ENCODE measurements at regions of chr5 and their contacts with region 1.

Region 1: GRCh38 chr5:138575194-138576015 is at the start of gene HSPA9:
- DNase-seq: peak; percentile 98
- ATAC-seq: peak; percentile 91
- H3K4me3 ChIP-seq: peak within 1 kb of the TSS; percentile 85 to 97 (median 87)
- H3K27ac ChIP-seq: peak within 1 kb of the TSS; percentile 98
- H3K4me1 ChIP-seq: peaks cover 55% of the 10 kb centered on the region
- H3K27me3 ChIP-seq: no peaks in the 10 kb centered on the region; a peak in 1 of 5 replicates
- CTCF ChIP-seq: no peak; the same call in 1 of the 2 replicates
- EP300 ChIP-seq: peak; percentile 52 to 73
- POLR2A ChIP-seq: peak; percentile 80 to 92
- RAD21 ChIP-seq: peak; percentile 71
- total RNA-seq, gene HSPA9: 478 and 735 TPM in 2 replicates

Region 2: GRCh38 chr5:138391859-138392386 is 183.5 kb before region 1 on chr5:
- CTCF ChIA-PET with region 1: no interaction called
- POLR2A ChIA-PET with region 1: no interaction called
- in situ Hi-C with region 1: no loop called
- intact Hi-C with region 1: no loop called
- DNase-seq: no peak
- ATAC-seq: no peak
- H3K4me3 ChIP-seq: no peak overlapping the region
- H3K27ac ChIP-seq: no peak overlapping the region
- H3K4me1 ChIP-seq: no peaks in the 10 kb centered on the region
- H3K27me3 ChIP-seq: no peaks in the 10 kb centered on the region
- CTCF ChIP-seq: no peak
- EP300 ChIP-seq: no peak
- POLR2A ChIP-seq: no peak
- RAD21 ChIP-seq: no peak

Region 3: GRCh38 chr5:138752951-138753793 is 177.8 kb after region 1 on chr5 and contains the start of gene CTNNA1:
- CTCF ChIA-PET with region 1: no interaction called
- POLR2A ChIA-PET with region 1: interaction called, 5 read pairs
- in situ Hi-C with region 1: no loop called
- intact Hi-C with region 1: loop called (anchors 10 kb)
- DNase-seq: peak; percentile 62
- ATAC-seq: peak; percentile 76
- H3K4me3 ChIP-seq: peak within 1 kb of the TSS; percentile 83 to 98 (median 93)
- H3K27ac ChIP-seq: peak within 1 kb of the TSS; percentile 91
- H3K4me1 ChIP-seq: peaks cover 46% of the 10 kb centered on the region
- H3K27me3 ChIP-seq: no peaks in the 10 kb centered on the region
- CTCF ChIP-seq: 0 out of 2 replicates have a peak, but pooled peaks have one; percentile 10
- EP300 ChIP-seq: peak in 1 of 2 experiments; percentile 96; a peak in 2 of 4 replicates
- POLR2A ChIP-seq: peak; percentile 83 to 88
- RAD21 ChIP-seq: no peak
- total RNA-seq, gene CTNNA1: 162 and 212 TPM in 2 replicates